CD4-positive, alpha-beta T cell (primary cell): ENCODE measurements at regions of chr7 and their contacts with region 1.

Region 1: GRCh38 chr7:127585044-127585953 is at the start of gene GCC1:
- DNase-seq: peak; percentile 87 to 97 (median 93)
- ATAC-seq: peak; percentile 80
- H3K4me3 ChIP-seq: peak within 1 kb of the TSS; percentile 90
- H3K4me3 Mint-ChIP-seq: peak within 1 kb of the TSS; percentile 96
- H3K27ac ChIP-seq: peak within 1 kb of the TSS; percentile 71 to 72
- H3K27ac Mint-ChIP-seq: peak within 1 kb of the TSS; percentile 92
- H3K4me1 ChIP-seq: peaks cover 73% of the 10 kb centered on the region
- H3K4me1 Mint-ChIP-seq: peaks cover 88% of the 10 kb centered on the region
- H3K27me3 ChIP-seq: no peaks in the 10 kb centered on the region
- H3K27me3 Mint-ChIP-seq: no peaks in the 10 kb centered on the region
- CTCF ChIP-seq: no peak
- total RNA-seq, gene GCC1: 29.8 to 30.6 TPM

Region 2: GRCh38 chr7:127347567-127348246 is 237.6 kb before region 1 on chr7:
- CTCF ChIA-PET with region 1: interaction called, 4 read pairs
- POLR2A ChIA-PET with region 1: interaction called, 3 read pairs
- intact Hi-C with region 1: loop called in 1 of 2 experiments (anchors 5 kb)
- DNase-seq: peak; percentile 48 to 90 (median 68)
- ATAC-seq: peak; percentile 99
- H3K4me3 ChIP-seq: peak overlapping the region; percentile 38
- H3K4me3 Mint-ChIP-seq: peak overlapping the region; percentile 36
- H3K27ac ChIP-seq: no peak overlapping the region
- H3K27ac Mint-ChIP-seq: no peak overlapping the region
- H3K4me1 ChIP-seq: peaks cover 7% of the 10 kb centered on the region
- H3K4me1 Mint-ChIP-seq: peaks cover 36% of the 10 kb centered on the region
- H3K27me3 ChIP-seq: no peaks in the 10 kb centered on the region
- H3K27me3 Mint-ChIP-seq: no peaks in the 10 kb centered on the region
- CTCF ChIP-seq: peak; percentile 42

Region 3: DNA sequence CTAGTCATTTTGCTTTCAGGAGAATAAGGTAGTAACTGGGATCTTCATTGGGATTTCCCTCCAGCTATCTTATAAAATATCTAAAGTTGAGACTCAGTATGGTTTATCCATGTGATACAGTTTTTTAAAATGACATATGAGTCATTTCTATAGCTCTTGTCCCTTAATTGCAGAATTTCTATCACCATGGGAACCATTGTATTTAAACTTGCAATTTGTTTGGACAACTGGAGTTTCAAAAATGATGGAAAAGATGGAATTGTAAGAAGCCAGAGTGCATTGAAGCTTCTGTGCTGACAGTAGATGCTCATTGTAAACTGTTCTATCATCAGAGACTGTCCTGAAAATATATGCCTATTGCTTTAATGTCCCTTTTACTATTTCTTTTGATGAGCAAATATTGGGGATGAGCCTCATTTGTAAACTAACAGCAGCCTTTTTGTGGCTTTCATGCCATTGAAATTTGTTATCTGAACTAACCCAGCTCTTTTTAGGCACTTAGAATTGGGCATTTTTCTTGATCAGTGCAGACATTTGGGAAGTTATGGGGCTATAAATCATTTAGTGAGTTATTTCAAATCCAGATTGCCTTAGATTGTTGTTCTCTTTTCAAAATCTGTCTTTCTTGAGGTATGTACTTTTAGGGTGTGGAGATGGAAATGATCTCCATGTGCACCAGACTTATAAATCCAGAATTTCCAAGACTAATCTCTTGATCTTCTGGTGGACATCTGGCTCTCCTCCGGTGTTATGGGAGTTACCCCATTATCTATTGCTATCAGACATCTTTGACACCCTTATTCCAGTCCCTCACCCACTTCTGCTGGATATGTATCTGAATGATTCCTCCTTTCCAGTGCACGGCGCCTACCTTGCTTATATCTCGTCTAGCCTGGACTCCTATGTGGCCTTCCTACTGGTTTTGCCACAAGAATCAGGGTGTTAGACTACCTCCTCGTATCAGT is 225.7 kb after region 1 on chr7:
- CTCF ChIA-PET with region 1: no interaction called
- POLR2A ChIA-PET with region 1: no interaction called
- intact Hi-C with region 1: no loop called
- DNase-seq: no peak
- ATAC-seq: no peak
- H3K4me3 ChIP-seq: no peak overlapping the region
- H3K4me3 Mint-ChIP-seq: no peak overlapping the region
- H3K27ac ChIP-seq: no peak overlapping the region
- H3K27ac Mint-ChIP-seq: no peak overlapping the region
- H3K4me1 ChIP-seq: no peaks in the 10 kb centered on the region
- H3K4me1 Mint-ChIP-seq: peaks cover 39% of the 10 kb centered on the region
- H3K27me3 ChIP-seq: no peaks in the 10 kb centered on the region
- H3K27me3 Mint-ChIP-seq: no peaks in the 10 kb centered on the region
- CTCF ChIP-seq: no peak

Region 4: GRCh38 chr7:127858091-127858914 is 273.0 kb after region 1 on chr7:
- CTCF ChIA-PET with region 1: no interaction called
- POLR2A ChIA-PET with region 1: interaction called, 3 read pairs
- intact Hi-C with region 1: loop called in 1 of 2 experiments (anchors 5 kb)
- DNase-seq: peak in 1 of 14 experiments; percentile 8
- ATAC-seq: no peak
- H3K4me3 ChIP-seq: no peak overlapping the region
- H3K4me3 Mint-ChIP-seq: no peak overlapping the region
- H3K27ac ChIP-seq: no peak overlapping the region
- H3K27ac Mint-ChIP-seq: no peak overlapping the region
- H3K4me1 ChIP-seq: peaks cover 32% of the 10 kb centered on the region
- H3K4me1 Mint-ChIP-seq: peaks cover 50% of the 10 kb centered on the region
- H3K27me3 ChIP-seq: peaks cover 0 to 8% of the 10 kb centered on the region in 2 experiments
- H3K27me3 Mint-ChIP-seq: peaks cover 40% of the 10 kb centered on the region
- CTCF ChIP-seq: no peak

Region 5: GRCh38 chr7:128739048-128739962 is 1154.0 kb after region 1 on chr7 and contains the start of gene CALU:
- CTCF ChIA-PET with region 1: no interaction called
- POLR2A ChIA-PET with region 1: no interaction called
- intact Hi-C with region 1: loop called in 1 of 2 experiments (anchors 10 kb)
- DNase-seq: peak; percentile 87 to 97 (median 91)
- ATAC-seq: peak; percentile 91
- H3K4me3 ChIP-seq: peak within 1 kb of the TSS; percentile 97
- H3K4me3 Mint-ChIP-seq: peak within 1 kb of the TSS; percentile 100
- H3K27ac ChIP-seq: peak within 1 kb of the TSS; percentile 80 to 93
- H3K27ac Mint-ChIP-seq: peak within 1 kb of the TSS; percentile 96
- H3K4me1 ChIP-seq: peaks cover 19% of the 10 kb centered on the region
- H3K4me1 Mint-ChIP-seq: peaks cover 46% of the 10 kb centered on the region
- H3K27me3 ChIP-seq: no peaks in the 10 kb centered on the region
- H3K27me3 Mint-ChIP-seq: no peaks in the 10 kb centered on the region
- CTCF ChIP-seq: no peak
- total RNA-seq, gene CALU: 28.4 to 29.9 TPM

Region 6: DNA sequence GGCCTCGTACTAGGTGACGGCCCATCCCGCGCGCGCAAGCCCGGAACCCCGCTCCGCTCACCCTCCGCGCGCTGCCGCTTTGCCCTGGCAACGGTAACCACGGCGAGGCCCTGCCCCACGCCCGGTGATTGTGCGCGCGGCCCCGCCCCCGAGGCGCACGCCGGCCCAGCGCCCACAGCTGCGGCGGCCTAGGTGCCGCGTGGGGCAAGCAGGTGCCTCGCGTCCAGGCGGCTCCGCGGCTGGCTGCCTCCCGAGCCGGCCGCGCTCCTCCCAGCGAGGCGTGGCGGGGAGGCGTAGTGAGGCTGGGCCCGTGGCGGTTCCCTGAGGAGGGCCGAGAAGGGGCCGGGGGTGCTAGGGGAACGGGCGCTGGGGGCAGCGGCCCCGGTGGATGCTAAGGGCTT is 1917.1 kb after region 1 on chr7 and contains the start of gene SMKR1:
- CTCF ChIA-PET with region 1: no interaction called
- POLR2A ChIA-PET with region 1: no interaction called
- intact Hi-C with region 1: loop called in 1 of 2 experiments (anchors 10 kb)
- DNase-seq: peak; percentile 88 to 98 (median 94)
- ATAC-seq: peak; percentile 96
- H3K4me3 ChIP-seq: peak within 1 kb of the TSS; percentile 66
- H3K4me3 Mint-ChIP-seq: peak within 1 kb of the TSS; percentile 90
- H3K27ac ChIP-seq: peak within 1 kb of the TSS in 1 of 2 donors; percentile 13
- H3K27ac Mint-ChIP-seq: peak within 1 kb of the TSS; percentile 52
- H3K4me1 ChIP-seq: peaks cover 19% of the 10 kb centered on the region
- H3K4me1 Mint-ChIP-seq: peaks cover 6% of the 10 kb centered on the region
- H3K27me3 ChIP-seq: no peaks in the 10 kb centered on the region
- H3K27me3 Mint-ChIP-seq: no peaks in the 10 kb centered on the region
- CTCF ChIP-seq: no peak
- total RNA-seq, gene SMKR1: 0.22 to 0.49 TPM